WTC11 (cell line): ENCODE measurements at regions of chr16 and their contacts with region 1.

Region 1: DNA sequence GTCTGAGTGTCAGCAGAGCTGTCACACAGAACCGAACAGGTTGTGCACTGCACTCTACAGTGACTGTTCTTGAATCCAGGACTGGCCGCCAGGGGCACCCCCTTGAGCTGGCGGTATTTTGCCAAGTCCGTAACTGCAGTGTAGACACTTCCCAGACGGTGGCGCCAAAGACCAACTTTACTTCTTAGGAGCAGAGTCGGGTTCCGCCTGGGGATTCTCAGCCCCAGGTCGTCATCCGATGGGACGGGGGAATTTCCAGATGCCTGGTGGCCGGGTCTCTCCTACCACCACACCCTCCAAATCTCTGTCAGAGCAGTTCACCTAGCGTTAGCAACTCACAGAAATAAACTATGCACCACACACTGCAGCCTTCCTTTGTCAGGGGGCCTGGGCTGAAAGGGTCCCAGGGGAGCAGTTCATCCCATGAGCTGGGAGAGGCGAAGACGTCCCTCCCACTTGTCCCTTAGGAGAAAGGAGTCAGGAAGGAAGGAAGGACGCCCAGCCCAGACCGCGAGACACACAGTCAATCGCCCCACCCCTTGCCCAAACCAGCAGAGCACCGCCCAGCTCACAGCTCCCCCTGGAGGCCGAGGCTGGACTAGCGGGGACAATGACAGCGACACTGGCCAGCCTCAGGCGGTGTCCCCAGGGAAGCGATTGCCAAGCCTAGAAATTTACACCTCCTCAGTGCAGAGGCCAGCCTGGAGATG is 7.4 kb upstream of the RIPOR1 start:
- DNase-seq: peak; percentile 99
- ATAC-seq: peak; percentile 88
- H3K4me3 Mint-ChIP-seq: peak overlapping the region; percentile 84
- H3K27ac Mint-ChIP-seq: peak overlapping the region; percentile 95
- H3K4me1 Mint-ChIP-seq: no peaks in the 10 kb centered on the region
- H3K27me3 Mint-ChIP-seq: peaks cover 88% of the 10 kb centered on the region
- CTCF ChIP-seq: peak; percentile 72

Region 2: GRCh38 chr16:67480833-67481560 is 40.3 kb before region 1 on chr16 and contains the start of gene ATP6V0D1:
- CTCF ChIA-PET with region 1: interaction called, 70 read pairs
- POLR2A ChIA-PET with region 1: no interaction called
- DNase-seq: peak; percentile 99
- ATAC-seq: peak; percentile 95
- H3K4me3 Mint-ChIP-seq: peak within 1 kb of the TSS; percentile 98
- H3K27ac Mint-ChIP-seq: peak within 1 kb of the TSS; percentile 97
- H3K4me1 Mint-ChIP-seq: peaks cover 5% of the 10 kb centered on the region
- H3K27me3 Mint-ChIP-seq: peaks cover 36% of the 10 kb centered on the region
- CTCF ChIP-seq: peak; percentile 49; the same call in 1 of the 2 replicates
- total RNA-seq, gene ATP6V0D1: 32.5 to 44.1 TPM (median 33.8 TPM) in 3 replicates

Region 3: GRCh38 chr16:67504041-67505021 is 16.9 kb before region 1 on chr16:
- CTCF ChIA-PET with region 1: interaction called, 31 read pairs
- POLR2A ChIA-PET with region 1: no interaction called
- DNase-seq: no peak
- ATAC-seq: no peak
- H3K4me3 Mint-ChIP-seq: no peak overlapping the region
- H3K27ac Mint-ChIP-seq: no peak overlapping the region
- H3K4me1 Mint-ChIP-seq: peaks cover 5% of the 10 kb centered on the region
- H3K27me3 Mint-ChIP-seq: peaks cover 66% of the 10 kb centered on the region
- CTCF ChIP-seq: no peak

Region 4: GRCh38 chr16:67641779-67642708 is 120.8 kb after region 1 on chr16:
- CTCF ChIA-PET with region 1: interaction called, 74 read pairs
- POLR2A ChIA-PET with region 1: no interaction called
- DNase-seq: no peak
- ATAC-seq: no peak
- H3K4me3 Mint-ChIP-seq: no peak overlapping the region
- H3K27ac Mint-ChIP-seq: no peak overlapping the region
- H3K4me1 Mint-ChIP-seq: no peaks in the 10 kb centered on the region; the same call in 1 of the 2 replicates
- H3K27me3 Mint-ChIP-seq: peaks cover 26% of the 10 kb centered on the region
- CTCF ChIP-seq: no peak

Region 5: GRCh38 chr16:67667817-67668494 is 146.7 kb after region 1 on chr16:
- CTCF ChIA-PET with region 1: interaction called, 92 read pairs
- POLR2A ChIA-PET with region 1: no interaction called
- DNase-seq: peak; percentile 82
- ATAC-seq: peak; percentile 66
- H3K4me3 Mint-ChIP-seq: peak overlapping the region; percentile 84; the same call in 1 of the 2 replicates
- H3K27ac Mint-ChIP-seq: no peak overlapping the region
- H3K4me1 Mint-ChIP-seq: peaks cover 11% of the 10 kb centered on the region
- H3K27me3 Mint-ChIP-seq: peaks cover 6% of the 10 kb centered on the region
- CTCF ChIP-seq: no peak

Region 6: GRCh38 chr16:67749436-67750078 is 228.3 kb after region 1 on chr16:
- CTCF ChIA-PET with region 1: no interaction called
- POLR2A ChIA-PET with region 1: no interaction called
- DNase-seq: no peak
- ATAC-seq: no peak
- H3K4me3 Mint-ChIP-seq: no peak overlapping the region
- H3K27ac Mint-ChIP-seq: peak overlapping the region; percentile 96; the same call in 1 of the 2 replicates
- H3K4me1 Mint-ChIP-seq: peaks cover 8% of the 10 kb centered on the region; the same call in 1 of the 2 replicates
- H3K27me3 Mint-ChIP-seq: no peaks in the 10 kb centered on the region
- CTCF ChIP-seq: no peak